ENCODE measurements at regions of chr5 and their contacts with region 1.

Region 1: GRCh38 chr5:80487829-80488721 is at the start of gene FAM151B:
- DNase-seq: peak; percentile 90
- ATAC-seq: peak; percentile 97
- total RNA-seq, gene FAM151B: 1.8 TPM

Region 2: GRCh38 chr5:80109646-80110478 is 378.2 kb before region 1 on chr5:
- intact Hi-C with region 1: no loop called
- DNase-seq: peak; percentile 76
- ATAC-seq: peak; percentile 97

Region 3: GRCh38 chr5:80369521-80369920 is 118.6 kb before region 1 on chr5:
- intact Hi-C with region 1: no loop called
- DNase-seq: no peak
- ATAC-seq: no peak

Region 4: GRCh38 chr5:80453366-80453765 is 34.7 kb before region 1 on chr5:
- intact Hi-C with region 1: no loop called
- DNase-seq: no peak
- ATAC-seq: no peak

Region 5: GRCh38 chr5:80672140-80672736 is 184.2 kb after region 1 on chr5:
- intact Hi-C with region 1: loop called (anchors 10 kb)
- DNase-seq: peak; percentile 53
- ATAC-seq: peak; percentile 64

Region 6: DNA sequence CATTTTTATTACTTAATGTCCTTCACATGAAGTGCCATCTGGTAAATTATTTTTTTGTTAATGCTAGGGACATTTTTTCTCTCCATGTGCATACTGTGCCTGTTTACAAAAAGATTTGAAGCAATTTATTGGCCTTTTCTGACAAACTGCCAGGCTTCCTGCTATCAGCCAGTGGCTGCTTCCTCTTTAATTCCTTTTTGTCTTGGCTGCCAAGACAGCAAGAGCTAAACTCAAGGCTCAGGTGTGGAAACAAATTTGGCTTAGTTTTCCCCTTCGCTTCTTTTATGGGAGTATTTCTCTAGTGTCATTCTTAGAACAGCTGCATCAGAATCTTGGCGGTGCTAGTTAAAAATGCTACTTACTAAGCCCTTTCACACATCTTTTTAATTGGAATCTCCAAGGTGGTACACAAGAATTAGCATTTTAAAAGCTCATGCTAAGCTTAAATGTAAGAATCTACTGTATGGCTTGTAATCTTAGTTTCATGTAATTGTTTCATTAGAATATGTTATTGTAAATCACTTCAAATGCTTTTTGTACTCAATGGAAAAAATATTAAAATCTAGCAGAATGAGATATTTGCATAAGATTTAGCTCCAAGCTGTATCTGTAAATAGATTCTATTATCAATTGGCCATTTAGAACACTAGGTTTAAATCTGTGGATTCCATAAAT is 337.8 kb after region 1 on chr5:
- intact Hi-C with region 1: no loop called
- DNase-seq: no peak
- ATAC-seq: no peak

Measured in left ventricle myocardium superior (tissue), 1 donor.